ENCODE measurements at regions of chr16 and their contacts with region 1.

Region 1: DNA sequence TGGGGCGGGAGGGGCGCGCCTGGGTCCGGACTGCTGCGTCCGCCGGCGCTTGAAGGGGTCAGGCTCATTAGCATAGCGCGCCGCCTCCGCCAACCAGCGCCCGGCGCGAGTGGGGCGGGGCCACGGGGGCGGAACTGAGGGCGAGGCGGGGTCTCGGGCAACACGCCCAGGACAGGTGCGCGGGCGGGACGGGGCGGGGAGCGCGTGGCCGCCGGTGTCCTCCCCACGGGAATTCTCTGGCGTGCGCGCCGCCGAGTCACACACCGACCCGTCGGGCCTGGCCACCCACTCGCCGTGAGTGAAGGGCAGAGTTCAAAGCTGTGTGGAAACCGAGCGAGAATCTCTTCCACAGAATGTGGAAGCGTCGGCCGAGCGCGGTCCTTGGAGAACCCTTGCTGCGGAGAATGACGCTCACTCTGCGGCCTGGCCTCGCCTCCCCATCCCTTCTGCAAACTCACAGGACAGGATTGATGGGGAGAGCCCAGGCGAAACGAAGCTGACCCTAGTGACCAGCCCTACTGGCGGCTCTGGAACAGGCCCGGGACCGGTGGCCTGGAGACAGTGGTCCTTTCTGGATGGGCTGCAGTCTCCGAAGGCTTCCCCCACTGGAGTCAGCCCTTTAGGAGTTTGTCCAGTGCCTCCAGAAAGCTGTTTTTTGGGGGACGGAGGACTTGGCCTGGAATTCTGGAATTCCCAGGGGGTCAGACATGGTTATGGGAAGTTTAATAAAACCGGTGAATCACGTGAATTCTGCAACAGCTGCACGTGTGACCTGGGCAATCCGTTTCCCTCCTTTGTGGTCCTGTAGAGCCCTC is at the start of gene SNAI3:
- DNase-seq: peak; percentile 86
- H3K4me3 Mint-ChIP-seq: peak within 1 kb of the TSS; percentile 71
- H3K27ac Mint-ChIP-seq: no peak within 1 kb of the TSS
- H3K4me1 Mint-ChIP-seq: peaks cover 45% of the 10 kb centered on the region
- H3K27me3 Mint-ChIP-seq: no peaks in the 10 kb centered on the region
- total RNA-seq, gene SNAI3: 2.9 to 3.0 TPM

Region 2: GRCh38 chr16:88633684-88634140 is 52.9 kb before region 1 on chr16:
- CTCF ChIA-PET with region 1: no interaction called
- intact Hi-C with region 1: loop called (anchors 2 kb)
- DNase-seq: peak; percentile 59
- H3K4me3 Mint-ChIP-seq: peak overlapping the region; percentile 52
- H3K27ac Mint-ChIP-seq: no peak overlapping the region
- H3K4me1 Mint-ChIP-seq: peaks cover 39% of the 10 kb centered on the region
- H3K27me3 Mint-ChIP-seq: peaks cover 19% of the 10 kb centered on the region

Region 3: GRCh38 chr16:88662843-88663606 is 23.6 kb before region 1 on chr16 and contains the start of gene MVD:
- CTCF ChIA-PET with region 1: interaction called, 4 read pairs
- intact Hi-C with region 1: loop called (anchors 1 kb)
- DNase-seq: peak; percentile 97
- H3K4me3 Mint-ChIP-seq: peak within 1 kb of the TSS; percentile 90
- H3K27ac Mint-ChIP-seq: peak within 1 kb of the TSS; percentile 86
- H3K4me1 Mint-ChIP-seq: peaks cover 13% of the 10 kb centered on the region
- H3K27me3 Mint-ChIP-seq: no peaks in the 10 kb centered on the region
- total RNA-seq, gene MVD: 90.5 to 96.8 TPM

Region 4: GRCh38 chr16:88706288-88706964 is 19.8 kb after region 1 on chr16 and contains the starts of genes CTU2 and RNF166:
- CTCF ChIA-PET with region 1: interaction called, 10 read pairs
- intact Hi-C with region 1: loop called (anchors 1 kb)
- DNase-seq: peak; percentile 92
- H3K4me3 Mint-ChIP-seq: peak within 1 kb of the TSS; percentile 84
- H3K27ac Mint-ChIP-seq: peak within 1 kb of the TSS; percentile 77
- H3K4me1 Mint-ChIP-seq: peaks cover 60% of the 10 kb centered on the region
- H3K27me3 Mint-ChIP-seq: no peaks in the 10 kb centered on the region
- total RNA-seq, gene CTU2: 46.1 to 48.1 TPM
- total RNA-seq, gene RNF166: 33.6 to 35.3 TPM